HepG2 (cell line): ENCODE measurements at regions of chr2 and their contacts with region 1.

Region 1: DNA sequence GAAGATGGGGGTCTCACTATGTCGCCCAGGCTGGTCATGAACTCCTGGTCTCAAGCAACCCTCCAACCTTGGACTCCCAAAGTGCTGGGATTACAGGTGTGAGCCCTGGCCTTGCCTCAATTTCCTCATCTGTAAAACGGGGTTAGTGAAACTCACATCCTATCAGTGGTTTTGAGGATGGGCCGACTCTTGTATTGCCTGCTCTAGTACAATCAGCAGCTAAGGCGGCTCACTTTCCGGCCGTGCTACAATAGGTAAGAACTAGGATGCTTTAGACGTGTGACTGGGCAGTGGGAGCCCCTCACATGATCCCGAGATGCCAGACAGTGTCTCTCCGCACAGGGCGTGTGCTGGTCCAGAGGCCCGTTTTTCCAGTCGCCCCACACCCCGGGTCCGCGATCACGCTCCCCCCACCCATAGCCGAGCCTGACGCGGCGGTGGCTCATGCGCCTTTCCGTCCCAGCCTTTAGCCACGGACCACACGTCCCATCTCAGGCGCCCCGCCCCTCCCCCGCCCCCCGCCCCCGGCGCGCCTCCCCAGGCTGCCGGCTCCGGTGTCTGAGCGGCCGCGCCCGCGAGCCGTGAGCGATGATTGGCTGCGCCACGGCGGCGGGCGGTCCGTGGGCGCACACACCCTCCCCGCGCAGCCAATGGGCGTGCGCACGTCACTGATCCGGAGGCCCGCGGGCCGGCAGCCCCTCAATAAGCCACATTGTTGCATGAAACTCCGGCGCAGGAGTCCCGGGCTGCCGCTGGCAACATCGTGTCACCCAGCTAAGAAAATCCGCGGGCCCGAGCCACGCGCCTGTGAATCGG is at the start of gene HK2:
- DNase-seq: peak; percentile 85
- ATAC-seq: peak; percentile 90
- H3K4me3 ChIP-seq: peak within 1 kb of the TSS; percentile 87 to 99 (median 97)
- H3K27ac ChIP-seq: peak within 1 kb of the TSS; percentile 71
- H3K4me1 ChIP-seq: peaks cover 60% of the 10 kb centered on the region
- H3K27me3 ChIP-seq: peaks cover 0 to under 1% of the 10 kb centered on the region in 2 experiments; a peak in 1 of 5 replicates
- CTCF ChIP-seq: no peak
- EP300 ChIP-seq: no peak
- POLR2A ChIP-seq: peak; percentile 66 to 82
- RAD21 ChIP-seq: no peak
- total RNA-seq, gene HK2: 13.2 and 24.4 TPM in 2 replicates

Region 2: GRCh38 chr2:74715078-74715791 is 118.4 kb before region 1 on chr2:
- CTCF ChIA-PET with region 1: interaction called, 12 read pairs
- POLR2A ChIA-PET with region 1: interaction called, 3 read pairs
- in situ Hi-C with region 1: no loop called
- intact Hi-C with region 1: loop called (anchors 1 kb)
- DNase-seq: peak; percentile 72
- ATAC-seq: peak; percentile 94
- H3K4me3 ChIP-seq: peak overlapping the region; percentile 48 to 75 (median 74)
- H3K27ac ChIP-seq: no peak overlapping the region
- H3K4me1 ChIP-seq: peaks cover 45% of the 10 kb centered on the region
- H3K27me3 ChIP-seq: peaks cover 1 to 37% of the 10 kb centered on the region in 2 experiments; a peak in 3 of 5 replicates
- CTCF ChIP-seq: peak; percentile 99
- EP300 ChIP-seq: no peak
- POLR2A ChIP-seq: no peak
- RAD21 ChIP-seq: peak; percentile 92

Region 3: GRCh38 chr2:74764429-74765272 is 69.0 kb before region 1 on chr2:
- CTCF ChIA-PET with region 1: interaction called, 5 read pairs
- POLR2A ChIA-PET with region 1: interaction called, 30 read pairs
- in situ Hi-C with region 1: loop called (anchors 5 kb)
- intact Hi-C with region 1: loop called (anchors 1 kb)
- DNase-seq: peak; percentile 100
- ATAC-seq: peak; percentile 89
- H3K4me3 ChIP-seq: peak overlapping the region; percentile 0 to 58 (median 9); a peak in 2 of 6 replicates
- H3K27ac ChIP-seq: peak overlapping the region; percentile 81
- H3K4me1 ChIP-seq: peaks cover 91% of the 10 kb centered on the region
- H3K27me3 ChIP-seq: no peaks in the 10 kb centered on the region
- CTCF ChIP-seq: no peak
- EP300 ChIP-seq: peak; percentile 50 to 98; a peak in 3 of 4 replicates
- POLR2A ChIP-seq: no peak; a peak in 1 of 4 replicates
- RAD21 ChIP-seq: peak; percentile 29; the same call in 1 of the 2 replicates

Region 4: DNA sequence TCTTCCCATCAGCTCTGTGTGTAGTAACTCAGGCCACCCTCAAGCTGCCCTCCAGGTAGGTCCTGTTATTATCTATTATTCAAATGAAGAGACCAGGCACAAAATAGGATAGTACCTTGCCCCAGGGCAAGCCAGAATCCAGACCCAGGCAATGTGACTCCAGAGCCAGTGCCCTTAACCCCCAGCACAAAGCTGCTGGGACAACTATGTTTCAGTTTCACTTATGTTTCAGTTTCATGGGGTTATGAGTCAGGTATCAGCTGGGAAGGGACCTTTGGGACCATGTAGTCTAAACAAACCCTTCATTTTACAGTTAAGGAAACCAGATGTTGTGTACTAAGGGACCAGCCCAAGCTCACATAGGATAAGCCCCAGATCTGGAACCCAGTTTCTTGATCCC is 10.3 kb after region 1 on chr2:
- CTCF ChIA-PET with region 1: no interaction called
- POLR2A ChIA-PET with region 1: interaction called, 11 read pairs
- in situ Hi-C with region 1: no loop called
- intact Hi-C with region 1: no loop called
- DNase-seq: peak; percentile 76
- ATAC-seq: peak; percentile 66
- H3K4me3 ChIP-seq: no peak overlapping the region
- H3K27ac ChIP-seq: peak overlapping the region; percentile 10
- H3K4me1 ChIP-seq: peaks cover 99% of the 10 kb centered on the region
- H3K27me3 ChIP-seq: no peaks in the 10 kb centered on the region
- CTCF ChIP-seq: no peak
- EP300 ChIP-seq: no peak
- POLR2A ChIP-seq: no peak; a peak in 1 of 4 replicates
- RAD21 ChIP-seq: 0 out of 2 replicates have a peak, but pooled peaks have one; percentile 13

Region 5: DNA sequence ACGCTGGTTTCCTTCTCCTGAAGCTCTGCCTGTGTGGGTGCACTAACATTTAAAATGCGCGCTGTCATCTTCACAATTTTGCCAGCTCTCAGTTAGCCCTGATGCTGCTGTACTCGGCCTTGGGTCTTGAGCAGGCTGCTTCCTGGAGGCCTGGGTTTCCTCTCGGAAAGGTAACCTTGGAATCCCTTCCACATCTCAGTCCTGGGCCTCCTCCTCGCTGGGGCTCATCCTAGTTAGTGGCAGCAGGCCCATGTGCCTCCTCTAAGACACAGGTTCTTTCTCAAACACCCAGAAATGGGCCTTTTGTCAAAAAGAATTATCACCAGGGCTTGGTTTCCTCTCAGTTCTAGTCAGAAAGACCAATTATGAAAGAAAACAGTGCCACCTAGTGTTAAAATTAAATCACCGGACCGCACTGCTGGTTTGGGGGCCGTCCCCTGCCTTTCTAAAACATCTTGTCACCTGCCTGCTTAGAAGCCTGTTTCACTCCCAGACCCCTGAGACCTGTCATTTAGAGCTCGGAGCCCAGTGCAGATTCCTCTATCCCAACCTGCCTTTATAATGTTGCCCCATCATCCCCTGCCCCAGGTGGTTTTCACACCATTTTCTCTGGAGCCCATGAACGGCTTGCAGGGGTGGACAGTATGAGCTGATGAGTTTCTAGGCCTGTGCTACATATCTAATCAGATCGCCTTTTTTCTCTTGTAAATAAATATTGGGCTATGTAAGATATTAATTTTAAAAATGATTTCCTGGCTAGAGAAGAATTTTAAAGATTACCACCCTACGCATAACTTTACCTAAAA is 42.7 kb after region 1 on chr2:
- CTCF ChIA-PET with region 1: interaction called, 11 read pairs
- POLR2A ChIA-PET with region 1: interaction called, 4 read pairs
- in situ Hi-C with region 1: no loop called
- intact Hi-C with region 1: loop called (anchors 1 kb)
- DNase-seq: peak; percentile 61
- ATAC-seq: peak; percentile 71
- H3K4me3 ChIP-seq: no peak overlapping the region
- H3K27ac ChIP-seq: no peak overlapping the region
- H3K4me1 ChIP-seq: no peaks in the 10 kb centered on the region
- H3K27me3 ChIP-seq: no peaks in the 10 kb centered on the region
- CTCF ChIP-seq: peak; percentile 75
- EP300 ChIP-seq: no peak
- POLR2A ChIP-seq: no peak
- RAD21 ChIP-seq: peak; percentile 75